ENCODE measurements at regions of chr11 and their contacts with region 1.

Region 1: GRCh38 chr11:34266090-34266912 is 91.5 kb downstream of the ABTB2 start:
- DNase-seq: no peak
- ATAC-seq: peak; percentile 34
- H3K4me3 ChIP-seq: no peak overlapping the region
- H3K27ac ChIP-seq: peak overlapping the region; percentile 36
- H3K4me1 ChIP-seq: peaks cover 94% of the 10 kb centered on the region
- H3K27me3 ChIP-seq: no peaks in the 10 kb centered on the region
- CTCF ChIP-seq: no peak
- EP300 ChIP-seq: no peak
- POLR2A ChIP-seq: no peak
- RAD21 ChIP-seq: no peak

Region 2: DNA sequence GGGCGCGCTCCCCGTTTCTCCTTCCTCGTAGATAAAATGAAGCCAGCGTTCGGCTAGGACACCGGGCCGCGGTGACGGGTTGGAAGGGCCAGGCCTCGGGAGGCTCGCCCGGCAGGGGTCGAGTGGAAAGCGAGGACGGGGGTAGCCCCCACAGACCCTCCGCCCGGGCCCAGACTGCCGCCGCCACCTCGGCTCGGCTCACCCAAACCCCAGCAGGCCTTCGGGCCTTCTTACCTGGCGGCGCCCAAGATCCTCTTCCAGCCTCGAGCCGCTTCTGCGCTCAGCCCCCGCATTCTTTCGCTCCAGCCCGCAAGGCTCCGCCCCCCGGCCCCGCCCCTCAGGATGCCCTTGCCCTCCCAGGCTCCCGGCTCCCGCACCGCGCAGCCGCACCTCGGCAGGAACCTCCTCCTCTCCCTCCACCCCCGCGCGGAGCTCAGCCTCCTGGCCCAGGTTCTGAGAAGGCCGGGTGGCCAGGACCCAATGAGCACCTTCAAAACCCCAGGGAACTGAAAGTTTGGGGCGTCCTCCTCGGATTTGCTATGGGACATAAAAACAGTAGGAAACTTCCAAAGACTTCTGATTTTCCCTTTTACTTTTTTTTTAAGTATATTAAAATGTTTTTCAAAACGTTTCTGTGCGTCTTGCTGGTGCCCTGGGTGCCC is 530.0 kb before region 1 on chr11 and contains the start of gene CD59:
- CTCF ChIA-PET with region 1: no interaction called
- POLR2A ChIA-PET with region 1: no interaction called
- in situ Hi-C with region 1: no loop called
- intact Hi-C with region 1: no loop called
- DNase-seq: peak; percentile 85
- ATAC-seq: peak; percentile 95
- H3K4me3 ChIP-seq: peak within 1 kb of the TSS; percentile 80 to 93 (median 92)
- H3K27ac ChIP-seq: peak within 1 kb of the TSS; percentile 84
- H3K4me1 ChIP-seq: peaks cover 57% of the 10 kb centered on the region
- H3K27me3 ChIP-seq: no peaks in the 10 kb centered on the region; a peak in 1 of 5 replicates
- CTCF ChIP-seq: peak; percentile 18; the same call in 1 of the 2 replicates
- EP300 ChIP-seq: no peak
- POLR2A ChIP-seq: peak; percentile 87 to 91
- RAD21 ChIP-seq: no peak
- total RNA-seq, gene CD59: 184 and 289 TPM in 2 replicates

Region 3: GRCh38 chr11:34308913-34309585 is 42.7 kb after region 1 on chr11:
- CTCF ChIA-PET with region 1: no interaction called
- POLR2A ChIA-PET with region 1: no interaction called
- in situ Hi-C with region 1: no loop called
- intact Hi-C with region 1: loop called (anchors 1 kb)
- DNase-seq: peak; percentile 86
- ATAC-seq: peak; percentile 96
- H3K4me3 ChIP-seq: peak overlapping the region in 2 of 3 experiments; percentile 0 to 34; a peak in 2 of 6 replicates
- H3K27ac ChIP-seq: peak overlapping the region; percentile 31
- H3K4me1 ChIP-seq: peaks cover 25% of the 10 kb centered on the region
- H3K27me3 ChIP-seq: no peaks in the 10 kb centered on the region
- CTCF ChIP-seq: peak; percentile 35; the same call in 1 of the 2 replicates
- EP300 ChIP-seq: peak in 1 of 2 experiments; percentile 70; a peak in 2 of 4 replicates
- POLR2A ChIP-seq: no peak
- RAD21 ChIP-seq: peak; percentile 41; the same call in 1 of the 2 replicates